Activated naive CD4-positive, alpha-beta T cell treated with anti-CD3 and anti-CD28 coated beads for 36 hours (primary cell): ENCODE measurements at regions of chr3 and their contacts with region 1.

Region 1: GRCh38 chr3:17023006-17023664 is 138.4 kb downstream of the PLCL2 start:
- DNase-seq: peak; percentile 82
- H3K4me3 Mint-ChIP-seq: peak overlapping the region; percentile 60
- H3K27ac Mint-ChIP-seq: peak overlapping the region; percentile 90
- H3K4me1 Mint-ChIP-seq: peaks cover 73% of the 10 kb centered on the region
- H3K27me3 Mint-ChIP-seq: no peaks in the 10 kb centered on the region

Region 2: DNA sequence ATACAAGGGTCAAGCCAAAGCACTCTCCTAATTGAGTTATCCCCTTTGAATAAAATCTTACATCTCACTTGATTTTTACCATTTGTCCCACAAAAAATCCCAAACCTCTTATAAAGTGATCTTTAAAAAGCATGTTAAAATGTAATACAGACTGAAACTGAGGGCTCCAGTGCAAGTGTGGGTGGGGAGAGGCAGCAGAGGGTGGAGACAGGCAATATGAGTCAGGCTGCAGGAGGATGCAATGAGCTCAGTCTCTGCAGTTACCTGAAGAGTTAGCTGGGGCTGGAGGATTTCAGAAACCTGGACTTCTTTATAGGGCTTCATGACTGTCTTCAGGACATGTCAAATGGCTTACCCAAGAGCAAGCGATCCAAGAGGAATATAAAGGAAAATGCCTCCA is 1487.4 kb before region 1 on chr3:
- CTCF ChIA-PET with region 1: no interaction called
- intact Hi-C with region 1: no loop called
- DNase-seq: peak; percentile 71
- H3K4me3 Mint-ChIP-seq: no peak overlapping the region
- H3K27ac Mint-ChIP-seq: no peak overlapping the region
- H3K4me1 Mint-ChIP-seq: peaks cover 38% of the 10 kb centered on the region
- H3K27me3 Mint-ChIP-seq: no peaks in the 10 kb centered on the region

Region 3: DNA sequence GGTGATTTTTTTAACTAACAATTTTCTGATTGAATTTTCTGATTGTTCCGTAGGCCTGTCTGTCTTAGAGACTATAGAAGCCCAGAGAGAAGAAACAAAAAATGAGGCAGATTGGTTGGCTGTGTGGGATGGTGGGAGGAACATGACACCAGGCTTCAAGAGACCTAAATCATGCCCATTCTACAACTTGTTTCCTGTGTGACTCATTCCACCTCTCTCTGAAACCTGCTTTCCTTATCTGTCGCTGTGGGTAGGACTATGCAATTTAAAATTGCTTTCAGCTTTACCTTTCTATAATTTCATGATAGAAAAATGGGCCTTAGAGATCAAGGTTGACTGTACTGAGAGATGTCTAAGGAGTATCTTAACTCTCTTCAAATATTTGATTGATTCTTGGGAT is 713.6 kb before region 1 on chr3:
- CTCF ChIA-PET with region 1: no interaction called
- intact Hi-C with region 1: loop called (anchors 5 kb)
- DNase-seq: peak; percentile 76
- H3K4me3 Mint-ChIP-seq: peak overlapping the region; percentile 22
- H3K27ac Mint-ChIP-seq: peak overlapping the region; percentile 92
- H3K4me1 Mint-ChIP-seq: peaks cover 91% of the 10 kb centered on the region
- H3K27me3 Mint-ChIP-seq: no peaks in the 10 kb centered on the region

Region 4: DNA sequence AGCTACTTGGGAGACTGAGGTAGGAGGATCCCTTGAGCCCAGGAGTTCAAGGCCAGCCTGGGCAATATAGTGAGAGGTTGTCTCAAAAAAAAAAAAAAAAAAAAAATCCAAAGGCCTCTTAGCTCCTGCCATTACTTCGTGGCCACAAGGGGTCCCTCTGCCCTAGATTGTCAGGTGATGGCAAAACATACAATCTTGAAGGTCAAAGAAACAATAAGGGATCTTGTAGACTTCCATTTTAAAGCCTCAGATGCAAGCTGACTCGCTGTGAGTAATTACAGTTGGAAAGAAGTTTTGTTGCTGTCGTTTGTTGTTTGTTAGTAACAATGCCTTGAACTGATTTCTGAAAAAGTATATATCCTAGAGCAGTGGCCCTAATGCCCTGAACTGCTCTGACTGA is 194.3 kb before region 1 on chr3:
- CTCF ChIA-PET with region 1: interaction called, 5 read pairs
- intact Hi-C with region 1: loop called (anchors 2 kb)
- DNase-seq: peak; percentile 75
- H3K4me3 Mint-ChIP-seq: no peak overlapping the region
- H3K27ac Mint-ChIP-seq: no peak overlapping the region
- H3K4me1 Mint-ChIP-seq: peaks cover 18% of the 10 kb centered on the region
- H3K27me3 Mint-ChIP-seq: no peaks in the 10 kb centered on the region

Region 5: DNA sequence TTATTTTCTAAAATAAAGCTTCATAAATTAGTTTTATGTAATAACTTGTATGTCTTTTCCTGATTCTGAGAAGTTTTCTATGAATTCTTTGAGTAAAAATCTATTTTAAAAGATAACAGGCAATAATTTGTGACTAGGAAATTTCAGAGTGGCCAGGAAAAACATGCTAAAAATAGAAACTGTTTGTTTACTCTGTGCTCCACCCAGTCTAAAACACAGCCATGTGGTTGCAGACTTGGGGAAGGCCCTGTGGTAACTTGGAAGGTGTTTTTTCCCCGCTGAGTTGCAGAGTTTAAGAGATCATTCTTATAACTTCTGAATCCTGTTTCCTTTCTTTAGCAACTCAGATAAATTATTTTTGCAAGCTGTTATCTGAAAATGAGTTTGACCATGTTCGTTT is 116.5 kb before region 1 on chr3:
- CTCF ChIA-PET with region 1: interaction called, 3 read pairs
- intact Hi-C with region 1: loop called (anchors 5 kb)
- DNase-seq: peak; percentile 43
- H3K4me3 Mint-ChIP-seq: no peak overlapping the region
- H3K27ac Mint-ChIP-seq: no peak overlapping the region
- H3K4me1 Mint-ChIP-seq: peaks cover 78% of the 10 kb centered on the region
- H3K27me3 Mint-ChIP-seq: no peaks in the 10 kb centered on the region